Activated naive CD4-positive, alpha-beta T cell treated with anti-CD3 and anti-CD28 coated beads for 36 hours (primary cell): ENCODE measurements at regions of chr19 and their contacts with region 1.

Region 1: GRCh38 chr19:44500148-44500956 is at the start of gene ZNF180:
- DNase-seq: peak; percentile 96
- H3K4me3 Mint-ChIP-seq: peak within 1 kb of the TSS; percentile 86
- H3K27ac Mint-ChIP-seq: peak within 1 kb of the TSS; percentile 83
- H3K4me1 Mint-ChIP-seq: peaks cover 30% of the 10 kb centered on the region
- H3K27me3 Mint-ChIP-seq: peaks cover 4% of the 10 kb centered on the region
- total RNA-seq, gene ZNF180: 3.3 to 5.2 TPM

Region 2: GRCh38 chr19:44401139-44402115 is 98.9 kb before region 1 on chr19 and contains the start of gene ZNF285:
- CTCF ChIA-PET with region 1: no interaction called
- intact Hi-C with region 1: loop called (anchors 1 kb)
- DNase-seq: peak; percentile 86
- H3K4me3 Mint-ChIP-seq: peak within 1 kb of the TSS; percentile 83
- H3K27ac Mint-ChIP-seq: no peak within 1 kb of the TSS
- H3K4me1 Mint-ChIP-seq: peaks cover 9% of the 10 kb centered on the region
- H3K27me3 Mint-ChIP-seq: peaks cover 2% of the 10 kb centered on the region
- total RNA-seq, gene ZNF285: 0.67 to 0.86 TPM

Region 3: DNA sequence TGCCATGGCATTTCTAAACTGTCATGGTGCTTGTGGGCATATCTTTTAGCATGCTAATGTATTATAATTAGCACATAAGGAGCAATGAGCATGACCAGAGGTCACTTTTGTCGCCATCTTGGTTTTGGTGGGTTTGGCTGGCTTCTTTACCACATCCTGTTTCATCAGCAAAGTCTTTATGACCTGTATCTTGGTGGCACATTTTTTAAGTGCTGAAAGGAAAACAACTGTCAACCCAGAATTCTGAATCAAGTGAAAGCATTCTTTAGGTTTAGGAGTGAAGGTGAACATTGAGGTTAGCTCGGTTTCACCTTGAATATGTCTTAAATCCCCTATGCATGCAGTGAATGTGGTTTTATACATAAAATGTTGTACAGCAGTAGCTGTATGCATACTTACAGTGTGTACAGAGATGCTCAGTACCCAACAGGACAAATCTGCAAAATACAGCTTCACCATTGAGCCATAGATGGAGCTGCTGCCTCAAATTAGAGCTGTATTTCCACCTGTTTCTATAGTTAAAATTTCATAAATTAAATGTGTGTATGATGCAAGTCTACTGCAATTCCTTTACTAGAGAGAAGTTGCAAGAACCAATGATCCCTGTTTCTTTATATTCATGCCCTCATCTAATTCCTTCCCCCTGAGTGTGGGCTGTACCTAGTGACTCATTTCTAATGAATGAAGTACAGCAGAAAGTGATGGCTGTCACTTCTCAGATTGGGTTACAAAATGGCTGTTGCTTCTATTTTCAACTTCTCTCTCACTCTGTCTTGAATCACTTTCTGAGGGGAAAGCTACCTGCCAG is 87.8 kb after region 1 on chr19:
- CTCF ChIA-PET with region 1: no interaction called
- intact Hi-C with region 1: loop called (anchors 1 kb)
- DNase-seq: peak; percentile 74
- H3K4me3 Mint-ChIP-seq: no peak overlapping the region
- H3K27ac Mint-ChIP-seq: peak overlapping the region; percentile 83
- H3K4me1 Mint-ChIP-seq: peaks cover 18% of the 10 kb centered on the region
- H3K27me3 Mint-ChIP-seq: peaks cover 4% of the 10 kb centered on the region

Region 4: GRCh38 chr19:44643605-44644401 is 143.5 kb after region 1 on chr19 and contains the start of gene PVR:
- CTCF ChIA-PET with region 1: no interaction called
- intact Hi-C with region 1: no loop called
- DNase-seq: peak; percentile 43
- H3K4me3 Mint-ChIP-seq: peak within 1 kb of the TSS; percentile 82
- H3K27ac Mint-ChIP-seq: peak within 1 kb of the TSS; percentile 71
- H3K4me1 Mint-ChIP-seq: peaks cover 2% of the 10 kb centered on the region
- H3K27me3 Mint-ChIP-seq: peaks cover 3% of the 10 kb centered on the region
- total RNA-seq, gene PVR: 8.9 to 9.8 TPM